ENCODE measurements at regions of chr17 and their contacts with region 1.

Region 1: DNA sequence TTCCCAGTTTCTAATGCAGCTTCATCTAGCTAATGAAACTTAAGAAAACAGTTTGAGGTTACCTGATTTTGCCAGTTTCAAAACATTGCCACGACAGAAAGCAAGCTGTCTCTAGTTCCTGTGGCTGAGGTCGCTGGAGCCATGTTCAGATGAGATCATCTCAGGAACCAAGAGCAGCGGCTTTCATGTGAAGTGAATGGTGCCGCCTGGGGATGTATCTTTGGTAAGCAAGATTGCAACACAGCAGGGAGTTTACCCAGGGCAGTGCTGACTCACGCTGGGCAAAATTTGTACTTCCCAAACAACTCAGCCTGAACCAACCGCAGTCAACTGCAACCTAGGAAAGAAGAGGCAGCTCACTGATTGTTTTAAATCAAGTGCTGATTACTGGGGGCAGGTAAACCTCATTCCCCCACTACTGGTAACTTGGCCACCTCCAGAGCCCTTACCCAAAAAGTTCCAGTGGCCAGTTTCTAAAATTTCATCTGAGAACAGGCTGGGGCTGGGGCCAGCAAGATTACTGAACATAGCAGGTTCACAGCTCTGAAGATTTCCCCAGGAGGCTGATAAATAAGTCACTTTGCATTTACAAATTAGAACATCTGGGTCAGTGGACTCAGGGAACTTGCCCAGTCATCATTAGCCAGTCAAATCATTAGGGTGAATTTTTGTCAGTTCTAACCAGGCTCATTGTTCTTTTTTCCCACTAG is at the start of gene RFFL:
- DNase-seq: peak; percentile 82 to 97 (median 85)
- H3K4me3 ChIP-seq: peak within 1 kb of the TSS in 1 of 2 donors; percentile 0
- H3K4me3 Mint-ChIP-seq: peak within 1 kb of the TSS; percentile 71 to 88 (median 82)
- H3K27ac ChIP-seq: peak within 1 kb of the TSS; percentile 62
- H3K27ac Mint-ChIP-seq: peak within 1 kb of the TSS; percentile 92 to 96 (median 94)
- H3K4me1 ChIP-seq: peaks cover 55% of the 10 kb centered on the region
- H3K4me1 Mint-ChIP-seq: peaks cover 43 to 77% (median 57%) of the 10 kb centered on the region in 4 donors
- H3K27me3 ChIP-seq: no peaks in the 10 kb centered on the region
- H3K27me3 Mint-ChIP-seq: no peaks in the 10 kb centered on the region
- total RNA-seq, gene RFFL: 72.1 to 82.3 TPM

Region 2: DNA sequence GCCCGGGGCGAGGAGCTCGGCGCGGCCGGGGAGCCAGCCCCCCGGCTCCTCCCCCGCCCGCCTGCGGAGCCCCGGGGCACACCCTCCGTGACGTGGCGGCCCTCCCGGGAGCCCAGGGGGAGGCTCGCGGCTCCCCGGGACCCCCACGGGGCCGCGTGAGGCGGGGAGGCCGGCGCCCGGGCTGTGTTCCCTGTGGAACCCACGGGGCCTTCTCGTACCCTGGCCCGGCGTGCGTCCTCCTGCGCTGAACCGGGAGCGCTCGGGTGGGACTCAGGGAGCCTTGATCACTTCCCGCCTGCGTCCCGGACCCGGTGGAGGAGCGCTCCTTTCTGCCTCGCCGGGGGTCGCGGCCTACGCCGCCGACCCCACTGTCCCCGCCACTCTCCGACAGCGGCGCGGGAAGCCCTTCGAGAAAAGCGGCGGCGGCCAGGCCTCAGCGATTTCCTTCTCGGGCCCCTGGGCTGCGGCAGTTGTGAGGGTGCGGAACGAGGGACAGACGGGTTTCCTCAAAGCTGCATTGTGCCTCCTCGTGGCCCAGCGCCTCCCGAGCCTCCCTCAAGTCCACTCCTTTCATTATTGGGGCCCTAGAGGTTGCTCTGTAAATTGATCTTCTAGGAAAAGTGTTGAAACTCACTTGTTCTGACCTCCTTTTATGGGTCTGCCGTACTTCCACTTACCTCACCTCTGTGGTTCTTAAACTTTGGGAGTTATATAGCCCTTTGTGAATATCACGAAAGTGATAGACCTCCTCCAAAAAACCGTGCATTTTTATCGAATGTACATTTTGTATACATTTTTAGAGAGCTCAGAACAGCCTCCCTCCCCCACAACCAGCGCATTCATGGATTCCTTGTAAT is 82.8 kb before region 1 on chr17:
- CTCF ChIA-PET with region 1: interaction called, 25 read pairs
- POLR2A ChIA-PET with region 1: interaction called, 11 read pairs
- intact Hi-C with region 1: loop called (anchors 1 kb)
- DNase-seq: peak in 4 of 5 donors; percentile 72 to 83 (median 78)
- H3K4me3 ChIP-seq: peak overlapping the region; percentile 53 to 68
- H3K4me3 Mint-ChIP-seq: peak overlapping the region; percentile 88 to 95 (median 91)
- H3K27ac ChIP-seq: peak overlapping the region; percentile 97
- H3K27ac Mint-ChIP-seq: peak overlapping the region; percentile 90 to 98 (median 94)
- H3K4me1 ChIP-seq: peaks cover 41% of the 10 kb centered on the region
- H3K4me1 Mint-ChIP-seq: peaks cover 39 to 58% (median 49%) of the 10 kb centered on the region in 4 donors
- H3K27me3 ChIP-seq: no peaks in the 10 kb centered on the region
- H3K27me3 Mint-ChIP-seq: no peaks in the 10 kb centered on the region

Region 3: GRCh38 chr17:35022536-35023063 is 41.1 kb before region 1 on chr17:
- CTCF ChIA-PET with region 1: interaction called, 79 read pairs
- POLR2A ChIA-PET with region 1: interaction called, 63 read pairs
- intact Hi-C with region 1: loop called (anchors 1 kb)
- DNase-seq: peak; percentile 59 to 84 (median 62)
- H3K4me3 ChIP-seq: no peak overlapping the region
- H3K4me3 Mint-ChIP-seq: peak overlapping the region; percentile 57 to 76 (median 66)
- H3K27ac ChIP-seq: peak overlapping the region; percentile 66
- H3K27ac Mint-ChIP-seq: peak overlapping the region; percentile 92 to 98 (median 96)
- H3K4me1 ChIP-seq: peaks cover 42% of the 10 kb centered on the region
- H3K4me1 Mint-ChIP-seq: peaks cover 45 to 70% (median 58%) of the 10 kb centered on the region in 4 donors
- H3K27me3 ChIP-seq: no peaks in the 10 kb centered on the region
- H3K27me3 Mint-ChIP-seq: no peaks in the 10 kb centered on the region

Region 4: DNA sequence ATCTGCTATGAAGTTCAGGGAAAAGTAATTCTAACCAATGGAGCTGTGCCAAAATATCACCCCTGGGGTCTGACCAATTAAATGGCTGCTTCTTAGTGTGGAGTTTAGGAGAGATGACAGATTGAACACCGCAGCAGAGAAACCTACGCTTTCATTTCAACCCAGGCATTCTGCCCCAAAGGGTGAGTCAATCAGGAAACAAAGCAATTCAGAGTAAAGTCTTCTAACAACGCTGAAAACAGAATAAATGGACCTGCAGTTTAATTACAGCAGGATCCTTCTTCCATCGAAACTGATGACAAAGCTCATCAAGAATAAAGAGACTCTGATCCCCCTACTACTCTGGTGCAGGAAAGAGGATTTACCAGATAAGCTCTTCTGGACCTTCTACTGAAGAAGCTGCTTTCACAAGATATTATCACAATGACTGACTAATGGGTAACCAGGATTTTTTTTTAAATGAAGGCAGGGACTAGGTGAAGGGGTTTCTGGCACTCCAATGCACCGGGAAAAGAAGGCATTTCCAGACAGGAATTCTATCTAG is 16.9 kb before region 1 on chr17:
- CTCF ChIA-PET with region 1: interaction called, 45 read pairs
- POLR2A ChIA-PET with region 1: interaction called, 179 read pairs
- intact Hi-C with region 1: loop called (anchors 1 kb)
- DNase-seq: peak; percentile 71 to 89 (median 73)
- H3K4me3 ChIP-seq: peak overlapping the region; percentile 26 to 35
- H3K4me3 Mint-ChIP-seq: peak overlapping the region; percentile 74 to 87 (median 86)
- H3K27ac ChIP-seq: peak overlapping the region; percentile 68
- H3K27ac Mint-ChIP-seq: peak overlapping the region; percentile 83 to 96 (median 92)
- H3K4me1 ChIP-seq: peaks cover 94% of the 10 kb centered on the region
- H3K4me1 Mint-ChIP-seq: peaks cover 55 to 82% (median 68%) of the 10 kb centered on the region in 4 donors
- H3K27me3 ChIP-seq: no peaks in the 10 kb centered on the region
- H3K27me3 Mint-ChIP-seq: no peaks in the 10 kb centered on the region

Region 5: GRCh38 chr17:35076874-35077273 is 13.2 kb after region 1 on chr17:
- CTCF ChIA-PET with region 1: interaction called, 22 read pairs
- POLR2A ChIA-PET with region 1: interaction called, 15 read pairs
- intact Hi-C with region 1: loop called (anchors 1 kb)
- DNase-seq: no peak
- H3K4me3 ChIP-seq: no peak overlapping the region
- H3K4me3 Mint-ChIP-seq: peak overlapping the region in 1 of 8 donors; percentile 13
- H3K27ac ChIP-seq: no peak overlapping the region
- H3K27ac Mint-ChIP-seq: peak overlapping the region in 1 of 7 donors; percentile 6
- H3K4me1 ChIP-seq: peaks cover 79% of the 10 kb centered on the region
- H3K4me1 Mint-ChIP-seq: peaks cover 58 to 78% (median 74%) of the 10 kb centered on the region in 4 donors
- H3K27me3 ChIP-seq: no peaks in the 10 kb centered on the region
- H3K27me3 Mint-ChIP-seq: no peaks in the 10 kb centered on the region

Region 6: GRCh38 chr17:35088881-35089585 is 25.4 kb after region 1 on chr17:
- CTCF ChIA-PET with region 1: interaction called, 49 read pairs
- POLR2A ChIA-PET with region 1: interaction called, 29 read pairs
- intact Hi-C with region 1: loop called (anchors 1 kb)
- DNase-seq: peak; percentile 86 to 95 (median 88)
- H3K4me3 ChIP-seq: peak overlapping the region; percentile 76 to 96
- H3K4me3 Mint-ChIP-seq: peak overlapping the region; percentile 93 to 99 (median 96)
- H3K27ac ChIP-seq: peak overlapping the region; percentile 97
- H3K27ac Mint-ChIP-seq: peak overlapping the region; percentile 92 to 99 (median 97)
- H3K4me1 ChIP-seq: peaks cover 42% of the 10 kb centered on the region
- H3K4me1 Mint-ChIP-seq: peaks cover 28 to 55% (median 40%) of the 10 kb centered on the region in 4 donors
- H3K27me3 ChIP-seq: no peaks in the 10 kb centered on the region
- H3K27me3 Mint-ChIP-seq: no peaks in the 10 kb centered on the region

Region 7: GRCh38 chr17:35423761-35424160 is 360.1 kb after region 1 on chr17:
- CTCF ChIA-PET with region 1: no interaction called
- POLR2A ChIA-PET with region 1: no interaction called
- intact Hi-C with region 1: no loop called
- DNase-seq: no peak
- H3K4me3 ChIP-seq: no peak overlapping the region
- H3K4me3 Mint-ChIP-seq: no peak overlapping the region
- H3K27ac ChIP-seq: no peak overlapping the region
- H3K27ac Mint-ChIP-seq: peak overlapping the region in 2 of 7 donors; percentile 27 to 59
- H3K4me1 ChIP-seq: peaks cover 10% of the 10 kb centered on the region
- H3K4me1 Mint-ChIP-seq: peaks cover 10 to 14% (median 12%) of the 10 kb centered on the region in 4 donors
- H3K27me3 ChIP-seq: no peaks in the 10 kb centered on the region
- H3K27me3 Mint-ChIP-seq: no peaks in the 10 kb centered on the region